Activated CD4-positive, alpha-beta memory T cell treated with anti-CD3 and anti-CD28 coated beads for 36 hours (primary cell): ENCODE measurements at regions of chr2 and their contacts with region 1.

Region 1: DNA sequence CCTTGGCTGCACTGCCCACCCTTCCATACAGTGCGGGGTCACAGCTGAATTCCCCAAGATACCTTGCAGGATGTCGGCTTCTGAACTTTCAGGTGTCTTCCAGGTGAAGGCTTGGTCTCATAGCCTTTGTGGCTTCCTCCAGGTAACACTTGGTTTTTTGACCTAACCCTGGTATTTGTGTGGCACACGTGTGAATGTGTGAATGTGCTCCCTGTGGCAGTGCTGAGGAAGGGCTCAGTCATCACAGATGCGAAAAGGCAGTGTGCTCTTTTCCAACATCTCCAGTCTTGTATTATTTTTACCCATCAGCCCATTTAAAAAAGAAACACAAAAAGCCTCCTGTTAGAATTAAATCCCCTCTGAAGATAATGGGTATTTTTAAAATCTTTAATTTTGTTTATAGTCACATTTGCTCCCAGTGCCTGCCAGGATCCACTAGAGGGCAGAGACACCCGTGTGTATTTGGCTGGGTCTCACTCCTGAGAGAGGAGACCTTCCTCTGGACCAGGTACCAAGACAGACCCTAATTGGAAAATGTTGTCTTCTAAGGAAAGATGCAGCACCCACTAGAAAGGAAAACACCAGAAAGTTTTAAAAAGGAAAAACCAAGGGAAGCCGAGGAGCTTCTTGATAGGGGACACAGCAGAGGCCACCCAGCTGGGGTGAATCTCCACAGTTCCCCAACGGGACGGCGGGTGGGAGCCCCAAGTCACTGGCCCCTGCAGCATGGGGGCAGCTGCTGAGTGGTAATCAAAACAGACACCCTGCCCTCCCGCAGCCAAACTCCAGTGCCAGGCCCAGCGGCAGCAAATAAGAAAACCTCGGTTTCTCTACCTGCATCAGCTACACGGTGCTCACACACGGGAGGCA is 27.7 kb downstream of the FAM110C start:
- DNase-seq: no peak
- H3K4me3 Mint-ChIP-seq: no peak overlapping the region
- H3K27ac Mint-ChIP-seq: no peak overlapping the region
- H3K4me1 Mint-ChIP-seq: peaks cover under 1% of the 10 kb centered on the region
- H3K27me3 Mint-ChIP-seq: peaks cover 6% of the 10 kb centered on the region

Region 2: DNA sequence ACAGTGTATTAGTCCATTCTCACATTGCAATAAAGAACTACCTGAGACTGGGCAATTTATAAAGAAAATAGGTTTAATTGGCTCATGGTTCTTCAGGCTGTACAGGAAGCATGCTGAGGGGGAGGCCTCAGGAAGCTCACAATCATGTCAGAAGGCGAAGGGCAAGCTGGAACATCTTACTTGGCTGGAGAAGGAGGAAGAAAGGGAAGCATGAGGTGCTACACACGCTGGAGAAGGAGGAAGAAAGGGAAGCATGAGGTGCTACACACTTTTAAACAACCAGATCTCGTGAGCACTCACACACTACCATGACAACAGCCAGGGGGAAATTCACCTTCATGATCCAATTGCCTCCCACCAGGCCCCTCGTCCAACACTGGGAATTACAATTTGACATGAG is 123.0 kb after region 1 on chr2:
- CTCF ChIA-PET with region 1: interaction called, 40 read pairs
- POLR2A ChIA-PET with region 1: no interaction called
- intact Hi-C with region 1: no loop called
- DNase-seq: no peak
- H3K4me3 Mint-ChIP-seq: no peak overlapping the region
- H3K27ac Mint-ChIP-seq: no peak overlapping the region
- H3K4me1 Mint-ChIP-seq: no peaks in the 10 kb centered on the region
- H3K27me3 Mint-ChIP-seq: peaks cover 6% of the 10 kb centered on the region